ENCODE measurements at regions of chr6 and their contacts with region 1.

Region 1: GRCh38 chr6:797479-798077 is 104.6 kb upstream of the EXOC2 start:
- DNase-seq: no peak
- H3K4me3 ChIP-seq: no peak overlapping the region
- H3K27ac ChIP-seq: no peak overlapping the region
- H3K4me1 ChIP-seq: no peaks in the 10 kb centered on the region
- H3K27me3 ChIP-seq: peaks cover 96% of the 10 kb centered on the region
- CTCF ChIP-seq: peak; percentile 87

Region 2: DNA sequence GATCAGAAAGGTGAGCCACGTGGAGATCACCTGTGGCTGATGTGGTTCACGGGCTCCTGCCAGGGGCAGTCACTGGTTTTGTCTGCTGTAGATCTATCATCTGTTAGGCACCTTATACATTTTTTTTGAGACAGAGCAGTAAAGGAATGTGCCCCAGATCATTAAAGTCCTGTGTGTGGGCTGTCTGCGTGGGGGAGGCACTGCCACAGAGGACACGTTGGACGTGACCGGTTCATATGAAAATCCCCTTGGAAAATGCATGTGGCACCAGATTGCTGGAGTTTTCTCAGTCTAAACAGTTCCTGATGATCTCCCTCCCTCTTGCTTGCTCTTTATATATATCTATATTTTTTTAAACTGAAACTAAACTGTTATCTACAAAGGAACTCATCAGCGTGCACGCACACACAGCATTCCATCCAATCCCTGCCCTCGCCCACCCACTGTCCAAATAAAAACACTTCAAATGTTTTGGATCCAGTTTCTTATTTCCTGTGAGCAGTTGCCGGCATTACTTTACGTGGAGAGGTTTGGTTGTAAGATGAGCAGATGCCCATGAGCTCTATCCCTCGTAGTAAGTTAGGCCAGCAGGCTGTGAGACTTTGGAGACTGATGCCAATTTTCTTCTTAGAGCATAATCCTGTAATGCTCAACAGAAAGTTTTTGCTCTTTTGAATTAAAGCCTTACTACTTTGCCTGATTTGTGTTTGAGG is 57.0 kb after region 1 on chr6:
- intact Hi-C with region 1: no loop called
- DNase-seq: no peak
- H3K4me3 ChIP-seq: no peak overlapping the region
- H3K27ac ChIP-seq: no peak overlapping the region
- H3K4me1 ChIP-seq: no peaks in the 10 kb centered on the region
- H3K27me3 ChIP-seq: peaks cover 28% of the 10 kb centered on the region
- CTCF ChIP-seq: no peak

Region 3: DNA sequence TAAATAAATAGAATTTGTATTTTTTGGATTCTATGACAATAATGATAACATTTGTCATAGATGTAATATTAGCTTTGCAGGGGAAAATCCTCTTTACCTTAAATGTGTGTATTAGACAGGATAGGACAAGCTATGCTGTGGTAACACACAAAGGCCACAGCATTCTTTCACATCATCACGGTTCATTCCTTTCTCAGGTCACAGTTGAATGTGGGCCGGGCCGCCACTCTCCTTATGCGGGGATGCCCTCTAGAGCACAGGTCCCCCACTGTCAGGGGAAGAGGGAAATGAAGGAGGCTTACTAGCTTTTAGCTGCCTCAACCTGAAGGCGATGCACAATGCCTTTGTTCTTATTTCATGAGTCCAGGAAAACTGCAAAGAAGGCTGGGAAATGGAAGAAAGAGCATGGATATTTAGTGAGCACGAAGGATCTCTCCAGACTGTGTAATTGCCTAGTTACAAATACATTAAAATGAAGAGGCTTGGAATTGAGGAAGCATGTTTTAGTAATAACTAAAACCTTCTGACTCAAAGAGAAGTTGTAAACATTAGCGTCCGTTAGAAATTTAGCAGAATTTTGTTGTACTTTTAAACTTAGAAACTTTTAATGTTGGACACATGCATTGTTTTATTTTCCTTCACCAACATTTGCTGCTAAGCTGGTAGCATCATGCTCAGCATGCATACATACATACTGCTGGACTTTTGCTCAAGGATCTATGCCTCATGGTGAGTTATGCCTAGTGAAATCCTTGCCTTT is 265.4 kb after region 1 on chr6:
- intact Hi-C with region 1: no loop called
- DNase-seq: no peak
- H3K4me3 ChIP-seq: no peak overlapping the region
- H3K27ac ChIP-seq: no peak overlapping the region
- H3K4me1 ChIP-seq: no peaks in the 10 kb centered on the region
- H3K27me3 ChIP-seq: peaks cover 7% of the 10 kb centered on the region
- CTCF ChIP-seq: no peak

Region 4: DNA sequence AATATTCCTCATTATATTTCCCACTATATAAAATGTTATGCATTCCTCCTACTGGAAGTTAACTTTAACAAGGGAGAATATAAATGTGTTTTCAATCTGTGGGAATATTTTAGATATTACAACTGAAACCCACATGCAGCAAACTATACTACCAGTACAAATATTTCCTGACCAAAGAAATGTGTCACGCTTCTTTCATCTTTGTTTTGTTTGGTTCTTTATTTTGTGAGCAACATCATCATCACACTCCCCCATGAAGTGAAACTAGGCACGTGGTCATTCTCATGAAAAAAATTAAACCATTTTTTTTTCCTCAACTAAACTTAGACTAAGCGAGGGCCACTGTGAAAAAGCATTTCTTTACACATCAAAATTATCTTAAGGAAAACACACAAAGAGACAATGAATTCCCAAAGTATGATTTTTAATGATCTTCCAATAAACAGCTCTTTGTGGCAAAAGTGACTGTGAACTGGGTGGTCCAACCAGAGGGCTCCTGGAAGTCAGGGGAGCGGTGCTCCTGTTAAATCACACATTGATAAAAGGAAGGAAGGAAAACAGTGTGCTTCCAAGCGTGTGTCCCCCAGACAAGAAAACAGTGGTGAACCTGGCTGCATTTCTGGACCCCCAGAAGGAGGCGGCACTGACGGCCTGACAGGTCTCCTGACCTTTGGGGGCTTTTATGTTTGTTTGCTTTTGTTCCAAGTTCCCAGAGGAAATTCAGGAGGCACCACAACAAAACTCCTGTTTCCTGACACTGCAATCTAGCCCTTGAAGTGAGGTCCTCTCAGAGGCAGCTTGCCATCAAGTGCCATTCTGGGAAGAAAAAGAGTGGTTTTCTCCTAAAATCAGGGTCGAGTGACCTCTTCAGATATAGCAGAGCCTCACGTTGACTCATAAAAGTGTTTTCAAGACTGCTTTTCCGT is 347.5 kb after region 1 on chr6:
- intact Hi-C with region 1: no loop called
- DNase-seq: no peak
- H3K4me3 ChIP-seq: no peak overlapping the region
- H3K27ac ChIP-seq: no peak overlapping the region
- H3K4me1 ChIP-seq: no peaks in the 10 kb centered on the region
- H3K27me3 ChIP-seq: peaks cover 56% of the 10 kb centered on the region
- CTCF ChIP-seq: no peak

Region 5: DNA sequence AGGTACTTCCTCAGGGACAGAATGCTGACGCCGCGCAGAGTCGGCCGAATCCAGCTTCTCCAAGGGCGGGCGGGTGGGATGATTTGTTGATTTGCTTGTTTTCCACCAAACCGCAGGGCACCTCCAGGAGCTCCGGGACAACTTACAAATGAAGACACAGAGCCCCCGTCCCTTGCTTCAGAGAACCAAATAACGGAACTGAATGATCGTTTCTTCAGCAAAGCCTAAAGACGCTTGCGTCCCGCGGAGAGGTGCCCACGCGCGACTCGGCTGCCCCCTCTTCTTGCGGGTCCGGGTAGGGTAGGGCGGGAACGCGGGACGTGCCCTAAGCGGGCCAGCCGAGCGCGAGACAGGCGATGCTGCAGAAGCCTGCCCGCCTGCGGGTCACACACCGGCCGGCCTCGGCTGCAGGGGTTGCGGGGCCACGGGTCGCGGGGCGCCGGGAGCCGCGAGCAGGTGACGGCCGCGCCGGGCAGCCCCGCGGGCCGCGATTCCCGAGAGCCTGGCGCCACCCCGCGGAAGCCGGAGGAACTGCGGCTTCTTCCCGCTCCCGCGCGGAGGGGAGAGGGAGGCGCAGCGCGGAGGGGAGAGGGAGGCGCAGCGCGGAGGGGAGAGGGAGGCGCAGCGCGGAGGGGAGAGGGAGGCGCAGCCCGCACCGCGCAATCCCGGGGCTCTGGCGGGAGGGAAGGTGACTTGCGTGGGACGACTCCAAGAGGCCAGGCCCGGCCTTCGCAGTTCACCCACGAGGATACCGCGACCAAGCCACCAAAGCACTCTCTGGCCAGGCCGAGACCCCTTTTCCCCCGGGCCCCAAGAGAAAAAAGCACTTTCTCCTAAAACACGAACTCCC is 584.1 kb after region 1 on chr6:
- intact Hi-C with region 1: loop called (anchors 5 kb)
- DNase-seq: no peak
- H3K4me3 ChIP-seq: peak overlapping the region; percentile 59
- H3K27ac ChIP-seq: no peak overlapping the region
- H3K4me1 ChIP-seq: peaks cover 63% of the 10 kb centered on the region
- H3K27me3 ChIP-seq: peaks cover 100% of the 10 kb centered on the region
- CTCF ChIP-seq: peak; percentile 95

Measured in left ventricle myocardium inferior (tissue), 1 donor.